Motor neuron (in vitro differentiated cells): ENCODE measurements at regions of chr10 and their contacts with region 1.

Region 1: DNA sequence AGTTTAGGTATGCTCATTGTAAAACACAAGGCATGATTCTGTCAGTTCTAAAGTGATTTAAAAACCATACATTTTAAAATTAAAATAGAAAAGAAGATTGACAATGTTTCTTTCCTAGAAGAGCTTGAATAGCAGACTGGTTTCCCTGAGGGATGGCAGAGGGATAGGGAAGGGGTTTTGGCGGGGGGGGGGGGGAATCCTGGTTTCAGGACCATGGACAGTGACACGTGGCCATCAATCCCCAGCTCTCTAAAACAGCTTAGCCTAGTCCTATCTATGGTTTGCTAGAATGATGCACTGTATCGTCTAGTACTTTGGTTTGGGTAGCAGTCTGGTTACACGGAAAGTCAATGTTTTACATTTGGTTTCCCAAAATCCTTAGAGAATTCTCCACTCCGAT is 88.7 kb downstream of the PHYHIPL start:
- ATAC-seq: no peak
- H3K4me3 ChIP-seq: no peak overlapping the region
- H3K27ac ChIP-seq: no peak overlapping the region
- H3K4me1 ChIP-seq: no peaks in the 10 kb centered on the region

Region 2: DNA sequence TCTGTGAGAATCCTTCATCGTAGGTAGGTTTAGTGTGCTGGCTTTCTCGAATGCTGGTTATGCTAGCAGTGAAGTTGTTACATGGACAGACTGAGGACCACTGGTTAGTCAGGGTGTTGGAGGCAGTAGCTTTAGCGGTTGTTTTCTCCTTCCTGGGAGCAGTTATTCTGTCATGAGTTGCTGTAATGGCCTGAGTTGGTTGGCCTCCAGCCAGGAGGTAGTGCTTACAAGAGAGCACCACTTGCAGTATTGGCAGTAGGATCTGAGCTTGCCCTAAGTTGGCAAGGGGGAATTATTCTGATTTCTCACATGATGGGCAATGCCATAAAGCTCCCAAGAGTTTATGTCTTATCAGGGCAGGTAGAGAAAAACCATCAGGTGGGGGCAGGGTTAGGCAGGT is 1055.5 kb before region 1 on chr10:
- in situ Hi-C with region 1: no loop called
- ATAC-seq: no peak
- H3K4me3 ChIP-seq: no peak overlapping the region
- H3K27ac ChIP-seq: no peak overlapping the region
- H3K4me1 ChIP-seq: no peaks in the 10 kb centered on the region

Region 3: GRCh38 chr10:59606551-59606961 is 341.4 kb after region 1 on chr10:
- in situ Hi-C with region 1: loop called in 1 of 9 experiments (anchors 25 kb)
- ATAC-seq: peak in 4 of 8 experiments; percentile 61 to 71 (median 65)
- H3K4me3 ChIP-seq: no peak overlapping the region
- H3K27ac ChIP-seq: no peak overlapping the region
- H3K4me1 ChIP-seq: peaks cover 0 to 6% of the 10 kb centered on the region in 2 donors